ENCODE measurements at regions of chr6 and their contacts with region 1.

Region 1: DNA sequence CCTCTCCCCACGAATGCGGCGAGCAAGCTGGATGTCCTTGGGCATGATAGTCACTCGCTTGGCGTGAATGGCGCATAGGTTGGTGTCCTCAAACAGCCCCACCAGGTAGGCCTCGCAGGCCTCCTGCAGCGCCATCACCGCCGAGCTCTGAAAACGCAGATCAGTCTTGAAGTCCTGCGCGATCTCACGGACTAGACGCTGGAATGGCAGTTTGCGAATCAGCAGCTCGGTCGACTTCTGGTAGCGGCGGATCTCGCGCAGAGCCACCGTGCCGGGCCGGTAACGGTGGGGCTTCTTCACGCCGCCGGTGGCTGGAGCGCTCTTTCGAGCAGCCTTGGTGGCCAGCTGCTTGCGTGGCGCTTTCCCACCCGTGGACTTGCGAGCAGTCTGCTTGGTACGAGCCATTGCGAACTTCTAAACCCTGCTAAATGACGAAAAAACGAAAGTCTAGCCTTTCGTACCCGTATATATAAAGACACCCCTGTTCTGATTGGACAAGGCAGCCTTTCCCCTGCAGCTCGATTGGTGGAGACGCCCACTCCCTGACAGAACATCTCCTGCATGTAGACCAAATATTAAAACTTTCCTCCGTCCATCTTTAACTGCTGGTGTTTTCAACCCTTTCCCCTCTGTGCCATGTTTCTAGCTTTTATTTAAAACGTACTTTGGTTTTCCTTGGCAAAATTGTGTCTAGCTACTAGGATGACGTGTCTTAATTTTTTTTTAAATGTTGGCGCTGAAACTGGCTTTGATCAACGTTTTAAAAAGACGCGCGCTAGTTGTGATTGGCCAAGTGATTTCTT is 109.8 kb downstream of the HFE start:
- DNase-seq: peak; percentile 75
- ATAC-seq: peak; percentile 43
- H3K4me3 Mint-ChIP-seq: peak overlapping the region; percentile 99
- H3K27ac Mint-ChIP-seq: peak overlapping the region; percentile 100
- H3K4me1 Mint-ChIP-seq: peaks cover 39% of the 10 kb centered on the region
- H3K27me3 Mint-ChIP-seq: no peaks in the 10 kb centered on the region
- CTCF ChIP-seq: no peak

Region 2: DNA sequence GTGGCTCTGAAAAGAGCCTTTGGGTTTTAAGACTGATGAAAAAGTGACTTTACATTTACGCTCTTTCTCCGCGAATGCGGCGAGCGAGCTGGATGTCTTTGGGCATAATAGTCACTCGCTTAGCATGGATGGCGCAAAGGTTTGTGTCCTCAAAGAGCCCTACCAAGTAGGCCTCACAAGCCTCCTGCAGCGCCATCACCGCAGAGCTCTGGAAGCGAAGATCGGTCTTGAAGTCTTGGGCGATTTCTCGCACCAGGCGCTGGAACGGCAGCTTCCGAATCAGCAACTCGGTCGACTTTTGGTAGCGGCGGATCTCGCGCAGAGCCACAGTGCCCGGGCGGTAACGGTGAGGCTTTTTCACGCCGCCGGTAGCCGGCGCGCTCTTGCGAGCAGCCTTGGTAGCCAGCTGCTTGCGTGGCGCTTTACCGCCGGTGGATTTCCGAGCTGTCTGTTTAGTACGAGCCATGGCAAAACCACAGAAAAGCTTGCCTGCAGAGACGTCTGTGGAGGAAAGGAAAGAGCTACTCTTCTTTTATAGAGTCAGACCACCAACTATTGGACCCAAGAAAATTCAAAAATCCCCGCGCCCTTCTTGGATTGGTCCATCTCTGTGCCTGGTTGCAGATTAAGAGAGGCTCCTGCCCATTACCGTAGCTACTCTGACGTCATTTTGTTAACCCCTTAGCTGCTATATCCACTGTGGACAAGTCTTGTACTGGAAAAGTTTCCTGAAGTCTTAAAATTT is 165.3 kb before region 1 on chr6:
- CTCF ChIA-PET with region 1: no interaction called
- POLR2A ChIA-PET with region 1: interaction called, 96 read pairs
- DNase-seq: peak; percentile 80
- ATAC-seq: peak; percentile 67
- H3K4me3 Mint-ChIP-seq: peak overlapping the region; percentile 91
- H3K27ac Mint-ChIP-seq: peak overlapping the region; percentile 100
- H3K4me1 Mint-ChIP-seq: peaks cover 59% of the 10 kb centered on the region
- H3K27me3 Mint-ChIP-seq: no peaks in the 10 kb centered on the region
- CTCF ChIP-seq: no peak

Region 3: DNA sequence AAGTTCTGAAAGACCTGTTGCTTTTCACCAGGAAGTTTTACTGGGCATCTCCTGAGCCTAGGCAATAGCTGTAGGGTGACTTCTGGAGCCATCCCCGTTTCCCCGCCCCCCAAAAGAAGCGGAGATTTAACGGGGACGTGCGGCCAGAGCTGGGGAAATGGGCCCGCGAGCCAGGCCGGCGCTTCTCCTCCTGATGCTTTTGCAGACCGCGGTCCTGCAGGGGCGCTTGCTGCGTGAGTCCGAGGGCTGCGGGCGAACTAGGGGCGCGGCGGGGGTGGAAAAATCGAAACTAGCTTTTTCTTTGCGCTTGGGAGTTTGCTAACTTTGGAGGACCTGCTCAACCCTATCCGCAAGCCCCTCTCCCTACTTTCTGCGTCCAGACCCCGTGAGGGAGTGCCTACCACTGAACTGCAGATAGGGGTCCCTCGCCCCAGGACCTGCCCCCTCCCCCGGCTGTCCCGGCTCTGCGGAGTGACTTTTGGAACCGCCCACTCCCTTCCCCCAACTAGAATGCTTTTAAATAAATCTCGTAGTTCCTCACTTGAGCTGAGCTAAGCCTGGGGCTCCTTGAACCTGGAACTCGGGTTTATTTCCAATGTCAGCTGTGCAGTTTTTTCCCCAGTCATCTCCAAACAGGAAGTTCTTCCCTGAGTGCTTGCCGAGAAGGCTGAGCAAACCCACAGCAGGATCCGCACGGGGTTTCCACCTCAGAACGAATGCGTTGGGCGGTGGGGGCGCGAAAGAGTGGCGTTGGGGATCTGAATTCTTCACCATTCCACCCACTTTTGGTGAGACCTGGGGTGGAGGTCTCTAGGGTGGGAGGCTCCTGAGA is 109.5 kb before region 1 on chr6 and contains the start of gene HFE:
- CTCF ChIA-PET with region 1: no interaction called
- POLR2A ChIA-PET with region 1: no interaction called
- DNase-seq: peak; percentile 66
- ATAC-seq: peak; percentile 89
- H3K4me3 Mint-ChIP-seq: peak within 1 kb of the TSS; percentile 85
- H3K27ac Mint-ChIP-seq: peak within 1 kb of the TSS; percentile 88
- H3K4me1 Mint-ChIP-seq: peaks cover 20% of the 10 kb centered on the region
- H3K27me3 Mint-ChIP-seq: peaks cover 2% of the 10 kb centered on the region; the same call in 1 of the 2 replicates
- CTCF ChIP-seq: no peak
- total RNA-seq, gene HFE: 1.9 to 2.4 TPM (median 2.0 TPM) in 3 replicates

Region 4: GRCh38 chr6:26175428-26176181 is 21.4 kb before region 1 on chr6:
- CTCF ChIA-PET with region 1: interaction called, 10 read pairs
- POLR2A ChIA-PET with region 1: interaction called, 27 read pairs
- DNase-seq: peak; percentile 46
- ATAC-seq: peak; percentile 7; the same call in 1 of the 2 replicates
- H3K4me3 Mint-ChIP-seq: peak overlapping the region; percentile 25; the same call in 1 of the 2 replicates
- H3K27ac Mint-ChIP-seq: 0 out of 2 replicates have a peak overlapping the region, but pooled peaks have one; percentile 45
- H3K4me1 Mint-ChIP-seq: peaks cover 28% of the 10 kb centered on the region
- H3K27me3 Mint-ChIP-seq: no peaks in the 10 kb centered on the region; the same call in 1 of the 2 replicates
- CTCF ChIP-seq: peak; percentile 28; the same call in 1 of the 2 replicates

Region 5: DNA sequence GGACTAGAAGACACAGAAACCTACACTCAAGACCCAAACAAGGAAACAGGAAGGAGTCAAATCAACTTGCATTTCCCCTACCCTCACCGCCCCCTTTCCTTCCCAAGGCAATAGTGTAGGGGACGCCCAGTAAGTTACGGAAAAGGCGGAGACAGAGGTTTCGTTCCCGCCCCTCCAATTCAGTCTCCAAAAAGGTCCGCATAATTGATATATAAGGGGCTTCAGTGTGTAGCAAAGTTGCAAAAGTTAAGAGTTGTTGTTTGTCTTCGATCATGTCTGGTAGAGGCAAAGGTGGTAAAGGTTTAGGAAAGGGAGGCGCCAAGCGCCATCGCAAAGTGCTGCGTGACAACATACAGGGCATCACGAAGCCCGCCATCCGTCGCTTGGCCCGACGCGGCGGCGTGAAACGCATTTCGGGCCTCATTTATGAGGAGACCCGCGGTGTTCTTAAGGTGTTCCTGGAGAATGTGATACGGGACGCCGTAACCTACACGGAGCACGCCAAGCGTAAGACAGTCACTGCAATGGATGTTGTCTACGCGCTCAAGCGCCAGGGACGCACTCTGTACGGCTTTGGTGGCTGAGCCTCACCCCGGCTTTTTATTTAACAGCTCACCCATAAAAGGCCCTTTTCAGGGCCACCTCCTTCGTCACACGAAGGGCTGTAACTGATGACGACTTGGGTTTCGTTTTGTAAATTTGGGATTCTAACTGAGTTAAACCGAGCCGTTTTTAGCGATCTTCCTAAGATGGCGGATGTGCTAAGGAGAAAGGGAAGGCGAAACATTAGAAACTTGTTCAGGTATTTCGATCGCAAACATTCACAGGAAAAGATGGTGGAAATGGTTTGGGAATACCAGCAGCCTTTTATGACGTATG is 43.3 kb after region 1 on chr6:
- CTCF ChIA-PET with region 1: no interaction called
- POLR2A ChIA-PET with region 1: interaction called, 100 read pairs
- DNase-seq: peak; percentile 81
- ATAC-seq: peak; percentile 84
- H3K4me3 Mint-ChIP-seq: peak overlapping the region; percentile 75
- H3K27ac Mint-ChIP-seq: peak overlapping the region; percentile 98
- H3K4me1 Mint-ChIP-seq: peaks cover 48% of the 10 kb centered on the region
- H3K27me3 Mint-ChIP-seq: no peaks in the 10 kb centered on the region; the same call in 1 of the 2 replicates
- CTCF ChIP-seq: no peak

Region 6: GRCh38 chr6:26295691-26296555 is 98.9 kb after region 1 on chr6:
- CTCF ChIA-PET with region 1: no interaction called
- POLR2A ChIA-PET with region 1: no interaction called
- DNase-seq: no peak
- ATAC-seq: no peak
- H3K4me3 Mint-ChIP-seq: no peak overlapping the region
- H3K27ac Mint-ChIP-seq: no peak overlapping the region
- H3K4me1 Mint-ChIP-seq: peaks cover 8% of the 10 kb centered on the region; the same call in 1 of the 2 replicates
- H3K27me3 Mint-ChIP-seq: no peaks in the 10 kb centered on the region; the same call in 1 of the 2 replicates
- CTCF ChIP-seq: no peak

Region 7: DNA sequence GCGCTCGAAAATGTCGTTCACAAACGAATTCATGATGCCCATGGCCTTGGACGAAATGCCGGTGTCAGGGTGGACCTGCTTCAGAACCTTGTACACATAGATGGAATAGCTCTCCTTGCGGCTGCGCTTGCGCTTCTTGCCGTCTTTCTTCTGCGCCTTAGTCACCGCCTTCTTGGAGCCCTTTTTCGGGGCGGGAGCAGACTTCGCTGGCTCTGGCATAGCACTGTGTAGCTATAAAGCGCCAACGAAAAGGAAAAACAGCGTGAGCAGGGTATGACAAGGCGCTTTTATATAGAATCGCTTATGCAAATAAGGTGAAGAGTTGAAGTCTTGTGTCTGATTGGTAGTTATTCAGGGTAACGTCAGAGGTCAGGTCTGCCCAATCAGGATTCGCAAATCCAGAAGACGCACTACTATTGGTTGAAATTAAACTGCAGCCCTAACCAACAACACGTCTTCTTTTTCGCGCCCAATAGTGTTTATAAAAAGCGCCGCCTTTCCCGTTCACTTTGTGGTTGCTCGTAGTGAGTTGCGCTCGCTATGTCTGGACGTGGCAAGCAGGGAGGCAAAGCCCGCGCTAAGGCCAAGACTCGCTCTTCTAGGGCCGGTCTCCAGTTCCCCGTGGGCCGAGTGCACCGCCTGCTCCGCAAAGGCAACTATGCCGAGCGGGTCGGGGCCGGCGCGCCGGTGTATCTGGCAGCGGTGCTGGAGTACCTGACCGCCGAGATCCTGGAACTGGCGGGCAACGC is 935.7 kb after region 1 on chr6:
- CTCF ChIA-PET with region 1: no interaction called
- POLR2A ChIA-PET with region 1: interaction called, 38 read pairs
- DNase-seq: peak; percentile 85
- ATAC-seq: peak; percentile 86
- H3K4me3 Mint-ChIP-seq: no peak overlapping the region
- H3K27ac Mint-ChIP-seq: no peak overlapping the region
- H3K4me1 Mint-ChIP-seq: peaks cover 65% of the 10 kb centered on the region
- H3K27me3 Mint-ChIP-seq: no peaks in the 10 kb centered on the region
- CTCF ChIP-seq: no peak

Region 8: DNA sequence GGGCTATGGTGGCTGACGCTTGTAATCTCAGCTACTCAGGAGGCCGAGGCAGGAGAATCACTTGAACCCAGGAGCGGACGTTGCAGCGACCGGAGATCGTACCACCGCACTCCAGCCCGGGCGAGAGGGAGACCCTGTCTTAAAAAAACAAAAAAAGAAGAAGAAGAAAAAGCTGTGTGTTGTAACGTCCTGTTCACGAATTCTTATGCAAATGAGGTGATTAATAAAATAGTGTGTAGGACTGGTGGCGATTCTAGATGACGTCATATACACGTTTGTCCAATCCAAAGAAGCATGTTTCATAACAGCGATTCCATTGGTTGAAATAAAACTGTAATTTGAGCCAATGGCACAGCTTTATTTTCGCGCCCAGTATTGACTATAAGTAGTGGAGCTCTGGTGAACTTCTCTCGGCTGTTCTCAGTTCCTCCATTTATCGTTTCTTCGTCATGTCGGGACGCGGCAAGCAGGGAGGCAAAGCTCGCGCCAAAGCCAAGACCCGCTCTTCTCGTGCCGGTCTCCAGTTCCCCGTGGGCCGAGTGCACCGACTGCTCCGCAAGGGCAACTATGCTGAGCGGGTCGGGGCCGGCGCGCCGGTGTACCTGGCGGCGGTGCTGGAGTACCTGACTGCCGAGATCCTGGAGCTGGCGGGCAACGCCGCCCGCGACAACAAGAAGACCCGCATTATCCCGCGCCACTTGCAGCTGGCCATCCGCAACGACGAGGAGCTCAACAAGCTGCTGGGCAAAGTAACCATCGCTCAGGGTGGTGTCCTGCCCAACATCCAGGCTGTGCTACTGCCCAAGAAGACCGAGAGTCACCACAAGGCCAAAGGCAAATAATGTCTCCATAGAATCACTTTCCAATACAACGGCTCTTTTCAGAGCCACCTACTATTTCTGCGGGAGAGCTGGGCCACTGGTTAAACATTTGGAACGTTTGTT is 1668.1 kb after region 1 on chr6:
- CTCF ChIA-PET with region 1: no interaction called
- POLR2A ChIA-PET with region 1: interaction called, 37 read pairs
- DNase-seq: peak; percentile 73
- ATAC-seq: peak; percentile 51
- H3K4me3 Mint-ChIP-seq: peak overlapping the region; percentile 97
- H3K27ac Mint-ChIP-seq: peak overlapping the region; percentile 100
- H3K4me1 Mint-ChIP-seq: peaks cover 25% of the 10 kb centered on the region
- H3K27me3 Mint-ChIP-seq: peaks cover 4% of the 10 kb centered on the region; the same call in 1 of the 2 replicates
- CTCF ChIP-seq: no peak